Activated CD4-positive, alpha-beta T cell treated with anti-CD3 and anti-CD28 coated beads, Interleukin-2, amount 10 ng/mL, durations not matched to agents 24 days and 14 days (primary cell): ENCODE measurements at regions of chr16 and their contacts with region 1.

Region 1: GRCh38 chr16:78099372-78100161 is at the start of gene WWOX:
- DNase-seq: peak; percentile 99
- H3K4me3 Mint-ChIP-seq: peak within 1 kb of the TSS; percentile 93
- H3K27ac Mint-ChIP-seq: peak within 1 kb of the TSS; percentile 95
- H3K4me1 Mint-ChIP-seq: peaks cover 15% of the 10 kb centered on the region
- H3K27me3 Mint-ChIP-seq: peaks cover 1% of the 10 kb centered on the region
- total RNA-seq, gene WWOX: 15.0 and 16.1 TPM in 2 replicates

Region 2: DNA sequence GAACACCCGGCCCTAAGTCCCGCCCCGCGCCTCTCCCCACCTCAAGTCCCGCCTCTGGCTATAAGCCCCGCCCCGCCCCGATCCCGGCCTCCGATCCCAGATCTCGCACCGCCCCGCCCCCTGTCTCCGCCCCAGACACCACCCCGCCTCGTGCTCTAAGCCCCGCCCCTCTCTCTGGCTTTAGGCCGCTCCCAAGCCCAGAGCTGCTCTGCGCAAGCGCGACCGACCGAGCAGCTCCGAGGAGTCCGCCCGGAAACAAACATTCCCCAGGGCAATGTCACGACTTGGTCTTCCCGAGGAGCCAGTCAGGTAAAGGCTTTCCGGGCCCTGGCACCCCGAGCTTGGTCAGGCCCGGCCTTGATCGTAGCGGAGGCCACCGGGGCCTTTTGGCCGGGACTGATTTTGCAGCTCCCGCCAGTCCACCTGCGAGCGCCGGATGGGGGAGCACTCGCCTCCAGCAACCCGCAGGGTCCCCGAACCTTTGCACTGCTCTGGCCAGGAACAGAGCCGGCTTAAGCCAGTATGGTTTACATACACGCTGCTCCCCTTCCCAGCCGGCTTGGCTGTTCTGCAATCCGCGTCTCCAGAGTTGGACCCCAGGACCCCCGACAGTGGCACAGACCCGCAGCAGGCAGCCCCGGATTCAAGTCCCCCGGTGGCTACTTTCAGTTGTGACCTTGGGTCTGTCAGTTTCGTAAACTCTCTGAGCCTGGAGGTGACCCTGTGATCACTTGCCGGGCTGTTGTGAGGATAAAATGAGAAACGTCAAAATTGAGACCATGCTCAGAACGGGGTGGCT is 377.1 kb before region 1 on chr16 and contains the start of gene NUDT7:
- intact Hi-C with region 1: loop called (anchors 5 kb)
- DNase-seq: peak; percentile 98
- H3K4me3 Mint-ChIP-seq: peak within 1 kb of the TSS; percentile 89
- H3K27ac Mint-ChIP-seq: peak within 1 kb of the TSS; percentile 71
- H3K4me1 Mint-ChIP-seq: peaks cover 11% of the 10 kb centered on the region
- H3K27me3 Mint-ChIP-seq: no peaks in the 10 kb centered on the region
- total RNA-seq, gene NUDT7: 4.0 TPM in 2 replicates

Region 3: DNA sequence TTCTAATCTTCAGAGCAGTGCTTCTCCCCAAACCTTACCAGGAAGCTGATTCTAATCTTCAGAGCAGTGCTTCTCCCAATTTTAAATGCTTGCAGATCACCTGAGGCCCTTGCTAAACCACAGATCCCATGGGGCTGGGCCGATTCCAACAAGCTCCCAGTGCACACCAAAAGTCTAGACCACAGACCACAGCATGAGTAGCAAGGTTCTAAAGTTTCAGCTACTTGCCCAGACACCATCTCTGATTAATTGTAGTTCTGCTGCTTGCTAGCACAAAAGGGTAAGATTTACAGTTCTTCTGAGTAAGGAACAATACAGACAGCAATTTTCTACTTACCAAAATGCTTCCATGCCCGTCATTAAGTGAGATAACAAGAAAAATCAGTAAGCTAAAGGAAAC is 65.0 kb before region 1 on chr16:
- intact Hi-C with region 1: no loop called
- DNase-seq: peak; percentile 57
- H3K4me3 Mint-ChIP-seq: no peak overlapping the region
- H3K27ac Mint-ChIP-seq: no peak overlapping the region
- H3K4me1 Mint-ChIP-seq: peaks cover 14% of the 10 kb centered on the region
- H3K27me3 Mint-ChIP-seq: peaks cover 11% of the 10 kb centered on the region

Region 4: DNA sequence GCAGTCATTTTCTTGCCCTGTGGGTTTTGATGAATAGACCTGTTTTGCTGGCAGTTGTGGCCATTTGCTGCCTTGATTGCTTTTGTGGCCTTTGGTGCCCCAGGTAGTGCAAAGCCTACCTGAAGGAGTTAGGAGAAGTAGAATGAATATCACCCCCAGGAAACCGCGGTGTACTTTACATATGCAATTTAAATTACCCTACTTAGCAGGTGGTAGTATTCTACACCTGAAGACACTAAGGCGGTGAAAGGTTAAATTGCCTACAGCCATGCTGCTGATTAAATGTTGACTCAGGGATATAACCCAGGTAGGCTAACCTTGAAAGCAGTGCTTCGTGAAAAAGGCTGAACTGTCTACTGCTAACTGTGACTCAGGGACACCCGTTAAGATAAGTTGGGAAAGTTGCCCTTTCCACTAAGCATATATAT is 27.3 kb before region 1 on chr16:
- intact Hi-C with region 1: no loop called
- DNase-seq: no peak
- H3K4me3 Mint-ChIP-seq: no peak overlapping the region
- H3K27ac Mint-ChIP-seq: no peak overlapping the region
- H3K4me1 Mint-ChIP-seq: no peaks in the 10 kb centered on the region
- H3K27me3 Mint-ChIP-seq: peaks cover 10% of the 10 kb centered on the region

Region 5: DNA sequence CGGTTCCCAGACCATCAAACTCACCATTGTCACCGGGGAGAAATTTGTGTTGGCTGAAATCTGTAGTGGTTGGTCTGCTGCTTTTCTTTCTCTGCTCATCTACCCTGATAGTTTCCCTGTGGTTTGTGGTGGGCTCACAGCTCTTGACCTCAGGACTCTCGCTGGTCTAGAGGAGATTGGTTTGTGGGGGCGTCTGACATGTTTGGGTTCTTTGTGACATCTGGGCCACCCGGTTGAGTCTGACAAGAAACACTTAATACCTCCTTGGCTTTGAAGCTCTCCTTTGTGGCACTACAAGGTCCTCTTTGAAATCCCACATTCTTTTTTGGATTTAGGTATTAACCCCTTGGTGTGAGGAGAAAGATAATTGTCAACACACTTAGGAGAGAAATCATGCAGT is 661.9 kb after region 1 on chr16:
- intact Hi-C with region 1: loop called (anchors 10 kb)
- DNase-seq: no peak
- H3K4me3 Mint-ChIP-seq: no peak overlapping the region
- H3K27ac Mint-ChIP-seq: no peak overlapping the region
- H3K4me1 Mint-ChIP-seq: no peaks in the 10 kb centered on the region
- H3K27me3 Mint-ChIP-seq: peaks cover 4% of the 10 kb centered on the region